IMR-90 (cell line): ENCODE measurements at regions of chr6 and their contacts with region 1.

Region 1: GRCh38 chr6:32529697-32530429 is at the start of gene HLA-DRB5:
- DNase-seq: no peak
- ATAC-seq: peak; percentile 27; the same call in 1 of the 2 replicates
- H3K4me3 ChIP-seq: no peak within 1 kb of the TSS
- H3K27ac ChIP-seq: no peak within 1 kb of the TSS
- H3K4me1 ChIP-seq: no peaks in the 10 kb centered on the region
- H3K27me3 ChIP-seq: no peaks in the 10 kb centered on the region
- CTCF ChIP-seq: no peak
- POLR2A ChIP-seq: no peak
- RAD21 ChIP-seq: no peak
- total RNA-seq, gene HLA-DRB5: not detected in 2 replicates

Region 2: DNA sequence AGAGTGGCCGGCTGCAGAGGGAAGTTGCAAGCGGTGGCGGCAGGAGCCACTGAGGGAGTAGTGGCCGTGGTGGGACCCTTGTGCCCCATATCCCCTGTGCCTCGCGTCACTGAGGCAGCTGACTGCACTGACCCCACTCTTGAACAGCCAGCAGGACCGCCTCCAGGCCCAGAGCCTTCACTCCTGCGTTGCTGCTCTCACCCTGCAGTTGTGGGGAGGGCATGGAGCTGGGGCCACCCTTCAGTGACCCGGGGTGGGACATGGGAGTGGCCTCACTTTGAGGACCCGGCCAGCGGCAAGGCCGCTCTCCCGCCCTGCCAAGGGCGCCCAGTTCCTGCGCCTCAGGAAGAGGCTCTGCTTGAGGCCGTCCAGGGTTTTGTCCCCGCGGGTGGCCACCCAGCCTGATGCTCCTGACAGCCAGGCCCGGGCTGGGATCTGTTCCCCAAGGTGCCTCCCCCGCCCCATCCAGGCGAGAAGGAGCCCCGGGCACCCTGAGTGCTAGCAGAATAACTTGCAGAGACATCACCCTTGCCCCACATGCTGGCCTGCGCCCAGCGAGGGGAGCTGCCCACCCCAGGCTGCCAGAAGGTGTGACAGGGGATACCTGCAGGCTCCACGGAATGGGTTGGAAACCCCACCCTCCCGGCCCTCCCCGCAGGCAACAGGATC is 45.8 kb before region 1 on chr6:
- CTCF ChIA-PET with region 1: no interaction called
- POLR2A ChIA-PET with region 1: no interaction called
- dilution Hi-C with region 1: no loop called
- in situ Hi-C with region 1: no loop called
- intact Hi-C with region 1: loop called (anchors 2 kb)
- DNase-seq: no peak
- ATAC-seq: no peak
- H3K4me3 ChIP-seq: no peak overlapping the region
- H3K27ac ChIP-seq: no peak overlapping the region
- H3K4me1 ChIP-seq: no peaks in the 10 kb centered on the region
- H3K27me3 ChIP-seq: no peaks in the 10 kb centered on the region
- CTCF ChIP-seq: no peak
- POLR2A ChIP-seq: no peak
- RAD21 ChIP-seq: no peak

Region 3: DNA sequence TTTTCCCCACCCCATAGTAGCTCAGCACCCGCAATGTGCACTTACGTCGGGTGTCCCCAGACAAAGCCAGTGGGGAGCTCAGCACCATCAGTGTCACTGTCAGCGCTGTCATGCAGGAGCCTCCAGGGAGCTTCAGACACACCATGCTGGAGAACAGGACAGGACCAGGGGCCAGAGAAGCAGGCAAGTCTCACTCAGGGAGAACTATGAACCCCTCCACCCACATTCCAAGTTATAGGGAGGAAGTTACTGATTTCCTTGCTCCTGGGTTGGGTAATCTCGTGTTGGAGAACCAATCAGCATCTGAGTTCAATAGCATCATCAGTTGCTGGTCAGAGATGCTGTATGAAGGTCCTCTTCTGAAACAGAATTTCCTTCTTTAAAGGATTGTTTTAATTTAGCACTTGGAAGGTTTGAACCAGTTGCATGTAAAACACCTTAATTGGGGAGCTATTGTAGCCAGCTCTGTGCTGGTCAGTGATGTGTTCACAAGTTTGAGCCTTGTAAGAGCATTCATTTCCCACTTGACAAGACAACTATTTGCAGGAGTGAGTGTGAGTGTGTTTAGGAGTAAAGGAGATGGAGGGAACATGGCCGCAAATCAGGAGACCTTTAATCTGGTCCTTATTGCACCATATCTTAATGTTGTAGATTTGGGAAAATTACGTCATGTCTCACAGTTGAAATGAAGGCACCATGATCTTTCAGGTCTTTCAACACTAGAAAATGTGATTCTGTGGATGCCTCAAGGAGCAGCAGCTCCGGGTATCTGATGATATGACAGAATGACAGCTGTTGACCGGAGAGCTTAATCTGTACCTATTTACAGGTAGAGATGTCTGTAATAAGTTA is 60.0 kb after region 1 on chr6 and contains the start of gene HLA-DRB1:
- CTCF ChIA-PET with region 1: no interaction called
- POLR2A ChIA-PET with region 1: no interaction called
- dilution Hi-C with region 1: no loop called
- in situ Hi-C with region 1: loop called (anchors 10 kb)
- intact Hi-C with region 1: no loop called
- DNase-seq: no peak
- ATAC-seq: peak; percentile 94
- H3K4me3 ChIP-seq: no peak within 1 kb of the TSS
- H3K27ac ChIP-seq: no peak within 1 kb of the TSS
- H3K4me1 ChIP-seq: no peaks in the 10 kb centered on the region
- H3K27me3 ChIP-seq: no peaks in the 10 kb centered on the region
- CTCF ChIP-seq: no peak
- POLR2A ChIP-seq: no peak
- RAD21 ChIP-seq: no peak
- total RNA-seq, gene HLA-DRB1: not detected in 2 replicates